PC-3 (cell line): ENCODE measurements at regions of chr21 and their contacts with region 1.

Region 1: GRCh38 chr21:42107881-42108553 is 36.9 kb downstream of the UMODL1 start:
- DNase-seq: peak; percentile 81
- ATAC-seq: peak; percentile 100
- H3K4me3 ChIP-seq: no peak overlapping the region
- H3K27ac ChIP-seq: no peak overlapping the region
- H3K4me1 ChIP-seq: peaks cover 12% of the 10 kb centered on the region; the same call in 1 of the 2 replicates
- H3K27me3 ChIP-seq: no peaks in the 10 kb centered on the region
- CTCF ChIP-seq: peak; percentile 87

Region 2: GRCh38 chr21:41993744-41994143 is 114.3 kb before region 1 on chr21:
- CTCF ChIA-PET with region 1: interaction called, 21 read pairs
- POLR2A ChIA-PET with region 1: no interaction called
- intact Hi-C with region 1: no loop called
- DNase-seq: peak; percentile 59
- ATAC-seq: peak; percentile 81
- H3K4me3 ChIP-seq: no peak overlapping the region
- H3K27ac ChIP-seq: peak overlapping the region; percentile 22; the same call in 1 of the 2 replicates
- H3K4me1 ChIP-seq: peaks cover 11% of the 10 kb centered on the region
- H3K27me3 ChIP-seq: no peaks in the 10 kb centered on the region
- CTCF ChIP-seq: no peak